ENCODE measurements at regions of chr19 and their contacts with region 1.

Region 1: DNA sequence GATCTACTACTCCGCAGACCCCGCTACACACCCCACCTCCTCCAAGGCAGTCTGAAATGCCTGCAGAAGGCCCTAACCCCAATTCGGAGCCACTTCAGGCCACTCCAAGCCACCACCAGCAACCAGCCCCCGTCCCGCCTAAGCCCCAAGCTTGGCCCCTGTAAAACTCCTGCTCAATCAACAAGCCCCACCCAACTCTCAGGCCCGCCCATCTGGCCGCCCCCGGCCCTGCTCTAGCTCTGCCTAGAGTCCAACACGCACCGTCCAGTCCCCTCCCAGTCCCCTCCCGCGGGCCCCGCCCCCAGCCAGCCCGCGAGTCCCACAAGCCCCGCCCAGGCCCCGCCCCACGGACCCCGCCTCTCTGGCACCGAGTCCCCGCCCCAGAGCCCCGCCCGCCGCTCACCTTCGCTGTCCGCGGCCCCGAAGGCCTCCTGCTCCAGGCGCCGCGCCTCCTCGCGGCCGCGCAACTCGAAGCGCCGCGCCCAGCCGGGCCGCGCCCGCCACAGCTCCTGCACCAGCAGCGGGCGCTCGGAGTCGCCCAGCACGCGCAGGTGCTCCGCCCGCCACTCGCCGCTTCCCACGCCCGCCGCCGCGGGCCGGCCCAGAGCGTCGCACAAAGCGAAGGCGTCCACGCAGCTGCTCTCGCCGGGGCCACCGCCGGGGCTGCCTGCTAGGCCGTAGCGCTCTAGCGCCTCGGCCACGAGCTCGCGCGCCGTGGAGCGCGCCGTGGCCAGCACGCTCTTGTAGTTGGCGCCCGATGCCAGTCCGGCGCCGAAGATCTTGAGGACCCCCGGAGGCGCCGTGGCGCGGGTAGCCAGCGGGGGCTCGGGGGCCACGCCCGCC is 1.6 kb downstream of the RASIP1 start:
- DNase-seq: peak; percentile 94
- H3K4me3 ChIP-seq: peak overlapping the region; percentile 73 to 80 (median 77)
- H3K27ac ChIP-seq: peak overlapping the region; percentile 8
- H3K4me1 ChIP-seq: peaks cover 24% of the 10 kb centered on the region
- H3K27me3 ChIP-seq: no peaks in the 10 kb centered on the region
- CTCF ChIP-seq: peak; percentile 29 to 30
- POLR2A ChIP-seq: no peak

Region 2: DNA sequence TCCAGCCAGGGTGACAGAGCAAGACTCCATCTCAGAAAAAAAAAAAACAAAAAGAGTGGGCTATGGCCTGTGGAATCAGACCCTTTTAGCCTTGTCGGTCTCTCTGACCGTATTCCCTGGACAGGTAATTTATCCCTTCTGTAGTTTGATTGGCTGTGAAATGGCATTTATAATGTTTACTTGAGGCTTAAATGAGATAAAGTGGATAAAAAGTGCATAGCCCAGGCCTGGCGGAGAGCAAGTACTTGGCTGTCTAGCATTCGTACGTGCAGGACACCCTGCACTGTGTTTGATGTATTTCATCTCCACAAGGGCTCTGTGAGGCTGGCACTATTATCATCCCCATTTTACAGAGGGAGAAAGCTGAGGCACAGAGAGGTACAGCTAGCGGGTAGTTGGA is 73.0 kb before region 1 on chr19:
- CTCF ChIA-PET with region 1: no interaction called
- POLR2A ChIA-PET with region 1: no interaction called
- dilution Hi-C with region 1: no loop called
- intact Hi-C with region 1: no loop called
- DNase-seq: no peak
- H3K4me3 ChIP-seq: no peak overlapping the region
- H3K27ac ChIP-seq: no peak overlapping the region
- H3K4me1 ChIP-seq: no peaks in the 10 kb centered on the region
- H3K27me3 ChIP-seq: no peaks in the 10 kb centered on the region
- CTCF ChIP-seq: no peak
- POLR2A ChIP-seq: no peak

Region 3: DNA sequence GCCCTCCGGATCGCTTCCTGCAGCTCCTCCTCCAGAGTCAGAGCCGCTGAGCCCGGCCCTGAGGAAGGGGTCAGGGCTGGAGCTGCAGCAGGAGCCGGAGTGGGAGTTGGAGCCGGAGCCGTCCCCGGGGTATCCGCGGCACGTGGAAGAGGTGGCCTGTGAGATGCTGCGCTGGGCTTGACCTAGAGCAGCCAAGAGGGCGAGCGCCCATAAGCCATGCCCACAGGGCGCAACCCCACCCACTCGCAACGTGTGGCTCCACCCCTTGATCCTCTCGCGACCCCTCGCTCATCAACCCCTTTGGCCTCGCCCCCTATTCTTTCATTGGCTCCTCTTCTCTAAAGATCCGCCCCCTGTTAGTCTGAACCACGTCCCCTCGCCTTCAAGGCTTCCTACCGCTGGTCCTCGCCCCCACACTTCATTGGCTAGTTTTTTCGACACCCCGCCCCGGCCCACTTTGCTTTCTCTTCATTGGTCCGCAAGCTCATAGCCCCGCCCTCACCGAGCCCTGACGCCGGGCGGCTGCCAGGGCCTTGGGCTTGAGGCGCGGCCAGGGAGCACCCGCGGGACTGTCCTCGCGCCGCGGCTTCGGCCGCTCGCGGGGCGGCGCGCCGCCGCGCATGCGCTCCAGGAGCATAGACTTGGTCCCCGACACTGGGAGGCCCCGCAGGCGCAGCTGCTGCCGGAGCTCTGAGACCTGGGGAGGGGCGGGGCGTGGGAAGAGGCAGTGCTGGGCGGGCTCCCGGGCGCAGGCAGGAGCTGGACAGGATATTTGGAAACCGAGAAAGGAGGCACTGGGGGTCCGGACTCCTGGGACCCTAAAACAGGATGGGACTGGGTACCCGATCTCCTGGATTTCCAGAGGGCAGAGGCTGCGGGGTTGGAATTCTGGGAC is 24.7 kb before region 1 on chr19:
- CTCF ChIA-PET with region 1: interaction called, 23 read pairs
- POLR2A ChIA-PET with region 1: no interaction called
- dilution Hi-C with region 1: no loop called
- intact Hi-C with region 1: loop called (anchors 1 kb)
- DNase-seq: peak; percentile 100
- H3K4me3 ChIP-seq: peak overlapping the region; percentile 37 to 63 (median 50)
- H3K27ac ChIP-seq: peak overlapping the region; percentile 52
- H3K4me1 ChIP-seq: peaks cover 15% of the 10 kb centered on the region
- H3K27me3 ChIP-seq: no peaks in the 10 kb centered on the region
- CTCF ChIP-seq: no peak
- POLR2A ChIP-seq: no peak

Region 4: DNA sequence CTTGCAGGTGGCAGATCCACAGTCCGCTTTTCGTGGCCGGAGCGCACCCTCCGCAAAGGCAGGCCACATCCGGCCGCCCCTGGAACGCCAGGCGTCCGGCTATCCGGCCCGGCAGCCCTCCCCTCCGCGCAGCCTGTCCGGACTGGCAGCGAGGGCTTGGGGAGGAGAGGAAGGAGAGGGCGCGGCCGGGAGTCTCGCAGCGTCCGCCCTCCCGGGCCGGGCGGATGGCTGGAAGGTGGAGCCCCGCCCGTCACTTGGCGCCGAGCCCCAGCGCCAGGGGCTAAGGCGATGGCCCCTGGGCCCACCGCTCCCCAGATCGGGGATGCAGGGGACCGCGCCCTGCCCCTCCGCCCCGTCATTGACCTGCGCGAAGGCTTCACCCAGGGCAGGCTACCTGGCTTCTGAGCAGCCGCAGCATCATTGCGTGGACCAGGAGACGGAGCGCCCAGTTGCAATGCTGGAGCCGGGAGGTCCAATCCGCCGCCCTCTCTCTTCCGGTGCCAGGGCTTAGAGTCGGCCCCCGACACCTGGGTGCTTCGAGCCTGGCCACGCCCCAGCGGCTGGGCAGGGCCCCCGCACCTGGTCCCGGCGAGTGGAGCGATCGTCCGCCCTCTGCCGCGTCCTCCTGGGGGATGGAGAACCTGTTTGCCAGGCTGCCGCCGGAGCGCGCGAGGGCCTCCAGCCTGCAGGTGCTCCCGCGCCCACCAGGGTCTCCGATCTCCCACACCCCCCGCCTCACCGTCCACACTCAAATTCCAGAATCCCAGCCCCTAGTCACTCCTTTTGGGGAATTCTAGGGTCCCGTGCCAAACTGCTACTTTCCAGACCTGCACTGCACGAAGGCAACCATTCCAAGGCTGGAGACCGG is 14.0 kb after region 1 on chr19 and contains the start of gene FUT1:
- CTCF ChIA-PET with region 1: interaction called, 12 read pairs
- POLR2A ChIA-PET with region 1: no interaction called
- dilution Hi-C with region 1: no loop called
- intact Hi-C with region 1: no loop called
- DNase-seq: no peak
- H3K4me3 ChIP-seq: peak within 1 kb of the TSS; percentile 56 to 81 (median 65)
- H3K27ac ChIP-seq: peak within 1 kb of the TSS; percentile 5
- H3K4me1 ChIP-seq: peaks cover 11% of the 10 kb centered on the region
- H3K27me3 ChIP-seq: no peaks in the 10 kb centered on the region
- CTCF ChIP-seq: no peak
- POLR2A ChIP-seq: peak; percentile 81
- total RNA-seq, gene FUT1: 4.8 and 5.2 TPM in 2 replicates

Region 5: DNA sequence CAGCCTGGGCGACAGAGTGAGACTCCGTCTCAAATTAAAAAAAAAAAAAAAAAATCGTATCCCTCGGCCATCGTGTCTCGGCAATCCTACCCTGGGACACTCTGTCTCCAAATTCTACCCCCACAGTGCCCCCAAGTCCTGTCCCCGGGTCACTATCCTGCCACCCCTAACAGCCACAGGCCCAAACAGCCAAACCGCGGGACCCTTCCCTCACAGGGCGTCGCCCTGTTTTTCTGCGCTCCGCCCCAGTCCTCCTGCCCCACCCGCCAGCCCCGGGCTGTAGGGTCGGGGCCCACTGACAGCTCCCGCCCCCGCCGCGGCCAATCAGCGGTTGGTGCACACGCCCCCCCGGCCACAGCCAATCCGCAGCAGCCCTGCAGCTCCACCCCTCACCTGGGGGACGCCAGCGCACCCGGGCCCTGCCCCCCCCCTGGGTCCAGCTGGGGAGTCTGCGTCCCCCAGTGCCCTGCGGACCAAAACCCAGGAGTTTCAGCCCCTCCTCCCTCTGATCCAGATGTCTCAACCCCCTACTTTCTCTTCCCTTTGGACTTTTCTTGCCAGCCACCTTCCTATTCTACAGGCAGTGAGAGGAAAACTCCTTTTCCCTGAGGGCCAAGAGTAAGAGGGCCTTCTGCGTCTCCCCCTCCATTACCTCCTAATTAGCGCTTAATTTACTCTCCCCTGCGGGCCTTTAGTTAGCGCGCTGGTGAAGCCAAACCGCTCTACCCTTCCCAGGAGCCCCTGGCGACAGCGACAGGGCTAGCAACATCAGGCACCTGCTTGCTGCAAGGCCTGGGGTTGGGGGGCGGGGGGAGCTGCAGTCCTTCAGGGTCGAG is 73.5 kb after region 1 on chr19:
- CTCF ChIA-PET with region 1: no interaction called
- POLR2A ChIA-PET with region 1: interaction called, 5 read pairs
- dilution Hi-C with region 1: no loop called
- intact Hi-C with region 1: loop called (anchors 2 kb)
- DNase-seq: peak; percentile 72
- H3K4me3 ChIP-seq: peak overlapping the region; percentile 12 to 29 (median 20)
- H3K27ac ChIP-seq: no peak overlapping the region
- H3K4me1 ChIP-seq: peaks cover 13% of the 10 kb centered on the region
- H3K27me3 ChIP-seq: no peaks in the 10 kb centered on the region
- CTCF ChIP-seq: no peak
- POLR2A ChIP-seq: peak; percentile 49

Measured in endothelial cell of umbilical vein (primary cell).